ENCODE measurements at regions of chr18 and their contacts with region 1.

Region 1: GRCh38 chr18:24488824-24489493 is 28.5 kb downstream of the HRH4 start:
- DNase-seq: no peak
- H3K4me3 ChIP-seq: no peak overlapping the region
- H3K27ac ChIP-seq: no peak overlapping the region
- H3K4me1 ChIP-seq: peaks cover 0 to 4% (median 0%) of the 10 kb centered on the region in 4 donors
- H3K27me3 ChIP-seq: no peaks in the 10 kb centered on the region
- CTCF ChIP-seq: peak; percentile 79 to 88 (median 85)
- EP300 ChIP-seq: no peak
- POLR2A ChIP-seq: no peak

Region 2: DNA sequence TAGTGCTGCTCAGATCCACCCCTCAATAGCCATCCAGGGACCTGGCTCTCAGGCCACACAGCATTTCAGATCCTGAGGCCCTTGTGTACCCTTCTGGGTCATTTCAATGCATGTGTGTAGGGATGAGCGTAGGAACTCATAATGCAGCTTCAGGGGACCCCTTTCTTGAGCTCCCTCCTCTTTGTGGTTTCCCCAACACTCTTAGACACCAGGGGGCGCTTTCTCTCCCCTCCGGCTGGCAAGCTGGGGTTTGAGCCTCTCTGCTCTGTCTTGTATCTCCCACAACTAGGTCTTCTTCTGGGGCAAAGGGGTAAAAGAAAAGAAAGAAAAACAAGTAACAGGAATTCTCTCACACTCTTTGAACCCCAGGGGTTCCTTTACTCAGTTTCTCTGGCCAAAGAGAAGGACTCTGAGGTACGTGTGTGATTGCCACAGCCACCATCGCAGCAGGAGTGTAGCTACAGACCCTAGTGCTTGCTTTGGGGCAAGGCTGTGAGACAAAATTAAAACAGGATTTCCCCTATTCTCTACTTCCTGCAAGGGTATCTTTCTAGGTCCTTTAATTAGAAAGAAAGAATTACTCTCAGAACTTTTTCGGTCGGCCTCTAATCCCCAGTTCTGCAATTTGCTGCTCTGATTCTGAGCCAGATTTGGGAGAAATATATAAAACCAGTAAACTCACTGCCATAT is 312.1 kb before region 1 on chr18:
- intact Hi-C with region 1: loop called (anchors 10 kb)
- DNase-seq: no peak
- H3K4me3 ChIP-seq: no peak overlapping the region
- H3K27ac ChIP-seq: no peak overlapping the region
- H3K4me1 ChIP-seq: peaks cover 4 to 12% (median 8%) of the 10 kb centered on the region in 4 donors
- H3K27me3 ChIP-seq: no peaks in the 10 kb centered on the region
- CTCF ChIP-seq: peak; percentile 59 to 78 (median 72)
- EP300 ChIP-seq: no peak
- POLR2A ChIP-seq: no peak

Region 3: GRCh38 chr18:24362758-24363157 is 126.2 kb before region 1 on chr18:
- intact Hi-C with region 1: loop called (anchors 2 kb)
- DNase-seq: no peak
- H3K4me3 ChIP-seq: no peak overlapping the region
- H3K27ac ChIP-seq: no peak overlapping the region
- H3K4me1 ChIP-seq: peaks cover 0 to 6% (median 4%) of the 10 kb centered on the region in 4 donors
- H3K27me3 ChIP-seq: no peaks in the 10 kb centered on the region
- CTCF ChIP-seq: no peak
- EP300 ChIP-seq: no peak
- POLR2A ChIP-seq: no peak

Region 4: DNA sequence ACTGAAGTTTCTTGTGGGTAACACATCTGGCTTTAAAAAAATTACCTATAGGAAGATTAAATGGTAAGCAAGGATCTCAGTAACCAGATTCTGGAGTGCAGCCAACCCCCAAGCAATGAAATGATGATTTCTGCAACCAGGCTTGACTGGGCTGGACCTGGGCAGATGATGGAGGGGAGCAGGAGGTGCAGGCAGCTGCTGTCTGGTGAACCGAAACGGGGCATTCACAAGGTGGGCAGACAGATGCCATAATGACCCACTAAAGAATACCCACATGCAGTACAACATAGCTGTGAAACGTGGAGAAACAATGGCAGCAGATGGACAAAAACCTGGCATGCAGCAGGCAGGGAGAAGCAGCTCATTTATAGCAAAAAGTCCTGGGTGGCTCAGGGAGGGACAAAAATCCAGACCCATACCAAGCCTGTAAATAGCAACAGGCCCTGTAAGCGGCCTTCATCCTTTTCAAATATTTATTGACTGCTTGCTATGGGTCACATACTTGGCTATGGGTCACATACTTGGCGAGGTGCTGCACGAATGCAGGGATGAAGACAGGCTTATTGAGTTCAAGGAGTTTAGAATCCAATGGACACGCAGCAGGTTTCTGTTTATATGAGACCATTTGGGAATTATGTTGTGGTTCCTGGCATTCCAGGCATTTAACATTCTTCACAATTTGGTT is 216.1 kb after region 1 on chr18:
- intact Hi-C with region 1: no loop called
- DNase-seq: no peak
- H3K4me3 ChIP-seq: no peak overlapping the region
- H3K27ac ChIP-seq: no peak overlapping the region
- H3K4me1 ChIP-seq: no peaks in the 10 kb centered on the region
- H3K27me3 ChIP-seq: peaks cover 0 to 12% (median 0%) of the 10 kb centered on the region in 4 donors
- CTCF ChIP-seq: no peak
- EP300 ChIP-seq: no peak
- POLR2A ChIP-seq: no peak

Region 5: DNA sequence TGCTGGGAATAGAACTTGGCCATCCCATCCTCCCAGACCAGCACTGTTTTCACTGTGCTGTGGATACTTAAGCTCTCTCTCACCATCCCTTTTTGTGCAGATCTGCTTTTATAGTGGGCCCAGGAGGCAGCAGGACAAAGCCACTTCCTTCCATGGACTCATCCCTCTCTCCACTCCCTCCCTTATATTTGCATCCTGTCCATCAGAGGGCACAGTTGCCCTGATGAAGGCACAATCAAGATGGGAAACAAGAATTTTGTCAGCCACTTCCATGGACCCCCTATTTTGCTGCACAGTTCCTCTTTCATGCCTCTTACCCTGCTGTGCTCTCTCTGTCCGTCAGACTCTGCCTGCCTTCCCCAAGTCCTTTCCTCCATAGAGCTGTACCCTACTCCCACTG is 310.2 kb after region 1 on chr18:
- intact Hi-C with region 1: no loop called
- DNase-seq: peak; percentile 2
- H3K4me3 ChIP-seq: no peak overlapping the region
- H3K27ac ChIP-seq: no peak overlapping the region
- H3K4me1 ChIP-seq: no peaks in the 10 kb centered on the region
- H3K27me3 ChIP-seq: peaks cover 0 to 6% (median 0%) of the 10 kb centered on the region in 4 donors
- CTCF ChIP-seq: no peak
- EP300 ChIP-seq: no peak
- POLR2A ChIP-seq: no peak

Measured in esophagus muscularis mucosa (tissue), 4 donors.